ENCODE measurements at regions of chr10 and their contacts with region 1.

Region 1: GRCh38 chr10:111076191-111076681 is 593 bp upstream of the ADRA2A start:
- DNase-seq: no peak
- H3K4me3 ChIP-seq: peak overlapping the region; percentile 49
- CTCF ChIP-seq: peak; percentile 90

Region 2: DNA sequence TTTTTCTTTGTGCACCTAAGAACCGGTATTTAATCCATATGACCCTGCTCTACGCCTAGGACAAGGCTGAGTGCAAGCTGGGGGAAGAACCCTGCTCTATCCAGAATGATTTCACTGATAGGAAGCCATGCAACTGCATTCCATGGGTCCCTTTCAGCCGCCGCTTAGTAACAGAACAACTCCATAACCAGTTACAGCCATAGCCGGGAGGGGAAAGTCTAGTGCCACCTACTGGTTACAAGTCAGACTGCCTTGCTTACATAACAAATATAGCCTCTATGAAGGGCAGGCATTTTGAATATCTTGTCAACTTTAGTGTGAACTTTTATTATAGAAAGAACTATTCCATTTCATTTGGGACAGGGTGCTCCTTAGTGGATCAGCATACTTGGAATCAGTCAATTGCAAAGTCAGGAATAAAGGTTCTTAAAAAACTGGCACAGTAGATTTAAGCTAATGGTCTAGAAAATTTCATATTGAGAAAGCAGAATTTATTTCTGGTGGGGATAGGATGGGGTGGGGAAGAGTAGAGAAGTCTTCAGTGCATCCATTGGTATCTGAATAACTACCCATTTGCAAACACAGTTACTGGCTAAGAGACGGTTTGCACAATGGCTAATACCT is 522.3 kb after region 1 on chr10:
- CTCF ChIA-PET with region 1: interaction called, 17 read pairs
- POLR2A ChIA-PET with region 1: no interaction called
- DNase-seq: peak; percentile 16
- H3K4me3 ChIP-seq: no peak overlapping the region
- CTCF ChIP-seq: peak; percentile 80

Measured in AG04449 (cell line).